Transverse colon (tissue), 4 donors: ENCODE measurements at regions of chr14 and their contacts with region 1.

Region 1: DNA sequence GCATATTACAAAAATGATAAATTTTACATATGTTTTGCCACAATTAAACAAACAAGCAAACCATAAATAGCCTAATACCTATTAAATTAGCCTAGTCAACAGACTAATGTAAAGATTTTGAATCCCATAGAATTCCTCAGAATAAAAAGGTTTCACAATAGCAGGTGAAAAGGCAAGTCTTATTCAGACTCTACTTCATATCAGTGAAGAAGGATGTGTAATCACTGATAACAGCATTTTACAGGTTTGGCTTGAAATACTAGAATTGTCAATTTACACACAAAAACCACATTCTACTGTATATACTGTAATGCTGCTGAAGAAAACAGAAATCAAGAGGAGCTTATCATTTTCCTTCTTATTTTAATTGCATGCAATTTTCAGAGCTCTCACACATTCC is 90.8 kb upstream of the SSTR1 start:
- DNase-seq: no peak
- H3K4me3 ChIP-seq: no peak overlapping the region
- H3K27ac ChIP-seq: no peak overlapping the region
- H3K4me1 ChIP-seq: peaks cover 0 to 3% (median 0%) of the 10 kb centered on the region in 4 donors
- H3K27me3 ChIP-seq: no peaks in the 10 kb centered on the region
- CTCF ChIP-seq: no peak
- EP300 ChIP-seq: no peak
- POLR2A ChIP-seq: no peak

Region 2: DNA sequence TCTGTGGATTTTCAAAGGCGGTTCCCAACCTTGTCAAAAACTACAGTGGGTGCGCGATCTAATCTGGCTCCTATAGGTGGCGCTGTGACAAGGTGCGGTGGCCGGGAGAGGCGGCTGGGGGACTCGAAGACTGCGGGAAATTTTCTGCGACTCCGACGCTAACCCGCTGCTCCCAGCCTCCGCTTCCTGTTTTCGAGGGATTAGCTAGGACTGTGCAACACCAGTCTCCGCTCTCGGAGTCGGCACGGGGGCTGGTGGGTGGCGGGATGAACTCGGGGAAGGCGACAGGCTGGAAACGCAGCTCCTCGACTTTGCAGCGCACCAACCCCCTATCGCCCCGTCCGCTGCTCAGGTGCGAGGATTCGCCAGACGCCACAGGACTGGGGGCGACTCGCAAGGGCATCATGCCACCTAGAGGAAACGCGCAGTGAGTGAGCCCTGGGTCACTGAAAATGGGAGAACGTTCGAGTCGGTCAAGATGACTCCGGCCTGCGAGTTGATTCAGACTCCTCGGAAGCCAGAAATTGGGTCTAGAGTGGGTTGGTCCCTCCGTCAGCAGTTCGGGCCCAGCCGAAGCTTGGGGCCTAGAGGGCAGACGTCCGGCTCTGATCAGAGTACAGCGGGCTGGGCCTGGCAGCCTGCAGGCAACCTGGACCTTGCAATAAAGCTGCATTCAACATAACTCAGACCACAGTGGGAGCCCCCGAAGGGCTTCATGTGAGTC is 1460.8 kb before region 1 on chr14:
- in situ Hi-C with region 1: no loop called
- intact Hi-C with region 1: no loop called
- DNase-seq: peak; percentile 32
- H3K4me3 ChIP-seq: peak overlapping the region in 1 of 4 donors; percentile 24
- H3K27ac ChIP-seq: no peak overlapping the region
- H3K4me1 ChIP-seq: peaks cover 8 to 42% (median 28%) of the 10 kb centered on the region in 4 donors
- H3K27me3 ChIP-seq: peaks cover 100% of the 10 kb centered on the region
- CTCF ChIP-seq: peak; percentile 36 to 53 (median 42)
- EP300 ChIP-seq: no peak
- POLR2A ChIP-seq: no peak

Region 3: DNA sequence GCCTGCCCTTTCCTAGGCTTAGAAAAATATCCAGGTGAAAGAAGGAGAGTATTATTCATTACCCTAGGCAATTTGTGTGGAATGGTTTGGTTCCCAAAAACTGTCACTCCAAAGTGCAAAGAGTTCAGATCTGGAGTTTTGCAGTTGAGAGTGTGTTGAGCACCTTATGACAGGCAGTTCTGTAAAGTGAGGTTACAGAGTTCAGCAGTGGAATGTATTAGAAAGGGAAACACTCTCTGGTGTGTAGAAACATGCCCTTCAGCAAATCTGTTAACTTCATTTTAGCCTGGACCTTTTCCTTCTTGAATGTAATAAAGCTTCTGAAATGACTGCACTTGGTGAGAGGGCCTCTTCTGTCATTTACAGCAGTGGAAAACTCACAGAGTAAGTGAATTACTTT is 63.2 kb before region 1 on chr14:
- in situ Hi-C with region 1: no loop called
- intact Hi-C with region 1: loop called (anchors 5 kb)
- DNase-seq: no peak
- H3K4me3 ChIP-seq: no peak overlapping the region
- H3K27ac ChIP-seq: no peak overlapping the region
- H3K4me1 ChIP-seq: no peaks in the 10 kb centered on the region
- H3K27me3 ChIP-seq: no peaks in the 10 kb centered on the region
- CTCF ChIP-seq: no peak
- EP300 ChIP-seq: no peak
- POLR2A ChIP-seq: no peak